Tibial artery (tissue), 4 donors: ENCODE measurements at regions of chr3 and their contacts with region 1.

Region 1: GRCh38 chr3:72458358-72458757 is 389.9 kb downstream of the SHQ1 start:
- DNase-seq: no peak
- H3K4me3 ChIP-seq: no peak overlapping the region
- H3K27ac ChIP-seq: no peak overlapping the region
- H3K4me1 ChIP-seq: peaks cover 0 to 11% (median 3%) of the 10 kb centered on the region in 4 donors
- H3K27me3 ChIP-seq: peaks cover 0 to 1% of the 10 kb centered on the region in 2 donors
- CTCF ChIP-seq: no peak

Region 2: GRCh38 chr3:71725279-71725991 is 732.9 kb before region 1 on chr3 and contains the start of gene EIF4E3:
- intact Hi-C with region 1: loop called (anchors 10 kb)
- DNase-seq: no peak
- H3K4me3 ChIP-seq: peak within 1 kb of the TSS; percentile 72 to 94
- H3K27ac ChIP-seq: peak within 1 kb of the TSS; percentile 73 to 76
- H3K4me1 ChIP-seq: peaks cover 0 to 17% (median 16%) of the 10 kb centered on the region in 4 donors
- H3K27me3 ChIP-seq: no peaks in the 10 kb centered on the region
- CTCF ChIP-seq: no peak